Testis (tissue), 5 donors: ENCODE measurements at regions of chr9 and their contacts with region 1.

Region 1: DNA sequence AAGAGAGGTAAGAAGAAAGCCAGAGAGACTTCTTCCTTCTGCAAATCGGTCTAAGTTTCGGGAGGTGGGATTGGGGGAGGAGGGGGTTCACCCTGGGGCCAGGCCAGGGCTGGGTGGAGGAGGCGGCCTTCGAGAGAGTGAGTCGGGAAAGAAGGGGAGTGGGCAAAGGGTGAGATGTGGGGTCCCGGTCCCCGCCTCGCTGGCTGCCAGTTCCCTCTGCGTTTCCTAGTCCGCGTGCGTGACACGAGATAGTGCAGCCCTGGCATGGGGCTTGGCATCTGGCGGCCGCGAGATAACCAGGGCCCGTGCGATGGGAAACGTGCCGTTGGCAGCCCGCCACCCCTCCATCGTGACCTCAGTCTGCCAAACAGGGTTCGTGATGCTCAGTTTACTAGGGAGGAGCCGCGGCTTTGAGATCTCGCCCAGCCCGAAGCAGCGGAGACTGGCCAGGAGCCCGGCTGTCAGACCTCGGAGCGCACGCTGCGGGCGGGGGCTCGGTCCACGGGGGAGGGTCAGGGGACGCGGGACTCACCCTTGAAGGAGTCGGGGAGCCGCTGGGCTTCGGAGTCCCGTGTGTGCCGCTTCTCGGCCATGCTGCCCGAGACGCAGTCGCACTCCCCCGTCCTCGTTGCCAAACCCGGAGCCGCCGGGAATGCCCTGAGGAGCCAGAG is at the start of gene STOM:
- DNase-seq: peak; percentile 85
- H3K4me3 ChIP-seq: peak within 1 kb of the TSS; percentile 69 to 78
- H3K27ac ChIP-seq: peak within 1 kb of the TSS; percentile 81 to 96
- H3K4me1 ChIP-seq: peaks cover 18% of the 10 kb centered on the region
- H3K27me3 ChIP-seq: no peaks in the 10 kb centered on the region
- CTCF ChIP-seq: no peak
- POLR2A ChIP-seq: peak; percentile 74
- total RNA-seq, gene STOM: 49.7 to 53.6 TPM

Region 2: GRCh38 chr9:121233906-121234901 is 135.5 kb before region 1 on chr9:
- intact Hi-C with region 1: no loop called
- DNase-seq: no peak
- H3K4me3 ChIP-seq: no peak overlapping the region
- H3K27ac ChIP-seq: no peak overlapping the region
- H3K4me1 ChIP-seq: no peaks in the 10 kb centered on the region
- H3K27me3 ChIP-seq: no peaks in the 10 kb centered on the region
- CTCF ChIP-seq: no peak
- POLR2A ChIP-seq: no peak

Region 3: GRCh38 chr9:121278535-121279261 is 91.0 kb before region 1 on chr9:
- intact Hi-C with region 1: loop called (anchors 5 kb)
- DNase-seq: peak; percentile 81
- H3K4me3 ChIP-seq: no peak overlapping the region
- H3K27ac ChIP-seq: peak overlapping the region; percentile 71 to 94
- H3K4me1 ChIP-seq: peaks cover 62% of the 10 kb centered on the region
- H3K27me3 ChIP-seq: no peaks in the 10 kb centered on the region
- CTCF ChIP-seq: peak; percentile 76 to 92 (median 82)
- POLR2A ChIP-seq: no peak

Region 4: GRCh38 chr9:121326130-121326838 is 43.4 kb before region 1 on chr9:
- intact Hi-C with region 1: loop called (anchors 5 kb)
- DNase-seq: peak; percentile 80
- H3K4me3 ChIP-seq: no peak overlapping the region
- H3K27ac ChIP-seq: peak overlapping the region; percentile 84 to 94
- H3K4me1 ChIP-seq: peaks cover 15% of the 10 kb centered on the region
- H3K27me3 ChIP-seq: no peaks in the 10 kb centered on the region
- CTCF ChIP-seq: no peak
- POLR2A ChIP-seq: no peak